WTC11 (cell line): ENCODE measurements at regions of chr17 and their contacts with region 1.

Region 1: DNA sequence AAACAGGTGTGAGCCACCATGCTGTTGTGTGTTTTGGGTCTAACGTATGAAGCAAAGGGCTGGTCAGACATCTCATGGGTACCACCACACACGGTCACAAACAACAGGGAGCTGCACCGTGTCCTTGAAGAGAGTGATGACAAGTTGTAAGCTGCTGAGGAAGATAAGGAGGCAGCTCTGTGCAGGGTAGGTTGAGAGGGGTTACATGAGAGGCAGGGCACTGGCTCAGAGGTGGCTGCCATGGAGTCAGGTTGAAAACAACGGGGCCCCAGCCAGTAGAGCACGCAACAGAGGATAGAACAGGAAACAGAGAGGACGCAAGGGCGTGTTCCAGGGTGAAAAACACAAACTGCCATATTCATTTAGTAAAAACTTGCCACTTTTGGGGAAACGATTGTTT is 52.2 kb downstream of the TRARG1 start:
- DNase-seq: peak; percentile 2
- ATAC-seq: no peak
- H3K4me3 Mint-ChIP-seq: no peak overlapping the region
- H3K27ac Mint-ChIP-seq: peak overlapping the region; percentile 34; the same call in 1 of the 2 replicates
- H3K4me1 Mint-ChIP-seq: no peaks in the 10 kb centered on the region
- H3K27me3 Mint-ChIP-seq: no peaks in the 10 kb centered on the region; the same call in 1 of the 2 replicates
- CTCF ChIP-seq: no peak

Region 2: GRCh38 chr17:1229432-1229899 is 102.2 kb before region 1 on chr17:
- CTCF ChIA-PET with region 1: interaction called, 13 read pairs
- POLR2A ChIA-PET with region 1: no interaction called
- DNase-seq: peak; percentile 31
- ATAC-seq: peak; percentile 49
- H3K4me3 Mint-ChIP-seq: peak overlapping the region; percentile 34
- H3K27ac Mint-ChIP-seq: no peak overlapping the region
- H3K4me1 Mint-ChIP-seq: peaks cover 8% of the 10 kb centered on the region
- H3K27me3 Mint-ChIP-seq: peaks cover 77% of the 10 kb centered on the region
- CTCF ChIP-seq: no peak

Region 3: GRCh38 chr17:1270210-1271010 is 61.3 kb before region 1 on chr17 and contains the start of gene BHLHA9:
- CTCF ChIA-PET with region 1: interaction called, 29 read pairs
- POLR2A ChIA-PET with region 1: no interaction called
- DNase-seq: peak; percentile 38
- ATAC-seq: peak; percentile 7
- H3K4me3 Mint-ChIP-seq: peak within 1 kb of the TSS; percentile 95
- H3K27ac Mint-ChIP-seq: no peak within 1 kb of the TSS
- H3K4me1 Mint-ChIP-seq: peaks cover 7% of the 10 kb centered on the region
- H3K27me3 Mint-ChIP-seq: peaks cover 7% of the 10 kb centered on the region
- CTCF ChIP-seq: no peak
- total RNA-seq, gene BHLHA9: 0.44 to 0.76 TPM in 2 of 3 replicates, not detected in the other

Region 4: GRCh38 chr17:1347589-1348323 is 16.0 kb after region 1 on chr17:
- CTCF ChIA-PET with region 1: interaction called, 25 read pairs
- POLR2A ChIA-PET with region 1: no interaction called
- DNase-seq: no peak
- ATAC-seq: no peak
- H3K4me3 Mint-ChIP-seq: no peak overlapping the region
- H3K27ac Mint-ChIP-seq: peak overlapping the region; percentile 86
- H3K4me1 Mint-ChIP-seq: peaks cover 37% of the 10 kb centered on the region
- H3K27me3 Mint-ChIP-seq: no peaks in the 10 kb centered on the region
- CTCF ChIP-seq: no peak

Region 5: DNA sequence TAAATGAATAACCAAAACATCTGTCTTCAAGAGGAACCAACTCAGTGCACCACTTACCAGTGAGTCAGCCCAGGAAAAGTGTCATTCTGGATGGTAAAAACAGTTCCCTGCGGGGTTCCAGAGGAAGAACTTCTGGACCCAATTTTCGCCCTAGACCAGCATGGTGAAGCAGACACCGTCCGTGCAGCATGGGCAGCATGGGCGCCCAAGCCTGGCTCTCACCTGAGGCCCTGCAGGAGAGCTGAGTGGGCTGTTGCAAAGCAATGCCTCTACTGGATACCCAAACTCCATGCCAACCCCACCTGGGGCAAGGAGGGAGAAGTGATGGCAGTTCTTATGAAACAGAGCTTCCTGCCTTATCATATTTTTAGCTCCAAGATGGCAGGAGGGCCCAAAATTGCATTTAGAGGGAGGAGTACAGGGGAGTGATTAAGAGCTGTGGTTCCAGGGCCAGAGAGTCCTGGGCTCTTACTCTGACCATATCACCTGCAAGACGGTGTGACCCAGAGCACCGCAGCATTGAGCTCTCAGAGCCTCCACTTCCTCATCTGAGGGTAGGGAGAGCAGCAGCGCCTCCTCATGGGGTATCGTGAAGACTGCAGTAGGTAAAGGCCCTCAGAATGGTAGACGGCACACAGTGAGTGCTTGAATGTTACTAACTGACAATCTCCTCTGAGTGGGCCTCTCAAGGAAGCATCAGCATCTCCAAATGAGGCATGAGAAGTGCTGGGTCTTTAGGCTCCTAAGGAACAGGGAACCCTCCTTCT is 201.3 kb after region 1 on chr17:
- CTCF ChIA-PET with region 1: interaction called, 10 read pairs
- POLR2A ChIA-PET with region 1: no interaction called
- DNase-seq: peak; percentile 75
- ATAC-seq: peak; percentile 97
- H3K4me3 Mint-ChIP-seq: no peak overlapping the region
- H3K27ac Mint-ChIP-seq: no peak overlapping the region
- H3K4me1 Mint-ChIP-seq: no peaks in the 10 kb centered on the region
- H3K27me3 Mint-ChIP-seq: no peaks in the 10 kb centered on the region
- CTCF ChIP-seq: peak; percentile 37; the same call in 1 of the 2 replicates